Colonic mucosa (tissue), 4 donors: ENCODE measurements at regions of chr14 and their contacts with region 1.

Region 1: DNA sequence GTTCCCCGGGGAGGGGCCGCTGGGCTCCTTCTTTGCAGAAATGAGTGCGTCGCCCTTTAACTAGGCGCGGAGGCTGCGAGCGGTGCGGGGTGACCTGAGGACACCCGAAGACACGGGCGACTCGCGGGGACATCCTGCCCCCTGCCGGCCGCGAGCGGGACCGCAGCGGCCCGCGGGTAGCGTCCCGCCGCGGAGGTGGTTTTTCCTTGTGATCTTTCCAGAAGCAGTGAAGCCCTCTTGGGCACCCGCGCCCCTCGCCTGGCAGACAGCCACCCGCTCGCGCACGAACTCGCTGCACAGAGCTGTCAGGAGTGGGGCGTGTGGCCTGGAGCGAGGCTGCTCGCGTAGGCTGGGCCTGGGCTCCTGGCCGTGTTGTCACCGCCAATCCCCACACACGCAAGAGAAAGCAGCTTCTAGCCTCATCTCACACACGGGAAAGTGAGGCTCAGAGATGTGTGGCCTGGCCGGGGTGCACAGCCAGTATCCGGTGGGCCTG is 67.2 kb downstream of the DIO3 start:
- DNase-seq: peak; percentile 73
- H3K4me3 ChIP-seq: no peak overlapping the region
- H3K27ac ChIP-seq: no peak overlapping the region
- H3K4me1 ChIP-seq: peaks cover 8% of the 10 kb centered on the region
- H3K27me3 ChIP-seq: no peaks in the 10 kb centered on the region
- CTCF ChIP-seq: peak; percentile 100

Region 2: DNA sequence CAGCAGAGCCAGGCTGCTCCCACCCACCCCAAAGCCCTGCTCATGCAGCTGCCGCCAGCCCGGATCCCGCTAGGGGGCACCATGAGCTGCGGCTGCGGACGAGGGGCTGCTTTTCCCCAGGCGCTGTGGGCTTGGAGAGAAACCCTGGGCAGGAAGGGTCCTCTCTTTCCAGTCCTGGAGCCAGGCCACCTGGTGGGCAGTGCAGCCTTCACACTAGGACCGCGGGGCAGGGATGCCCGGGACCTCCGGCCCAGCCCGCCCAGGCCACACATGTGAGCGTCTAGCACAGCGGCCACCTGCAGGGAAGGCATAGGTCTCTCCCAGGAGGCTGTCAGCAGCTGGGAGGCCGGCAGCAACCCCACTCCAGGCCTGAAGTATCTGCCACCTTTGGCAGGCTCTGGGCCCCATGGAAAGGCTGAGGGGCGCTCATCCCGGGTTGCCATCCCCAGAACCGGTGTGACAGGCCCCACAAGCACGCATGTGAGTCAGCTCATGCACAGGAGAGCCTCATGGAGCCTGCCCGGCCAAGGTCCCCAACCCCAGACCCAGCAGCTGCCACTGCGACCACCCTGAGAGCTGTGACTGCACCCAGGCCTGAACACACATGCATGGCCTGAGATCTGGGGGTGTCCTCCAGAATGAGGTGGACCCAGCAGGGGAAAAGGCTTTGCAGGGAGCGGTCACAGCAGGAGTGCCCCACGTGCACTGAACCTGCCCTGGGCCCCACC is 445.0 kb before region 1 on chr14:
- intact Hi-C with region 1: loop called (anchors 5 kb)
- DNase-seq: no peak
- H3K4me3 ChIP-seq: no peak overlapping the region
- H3K27ac ChIP-seq: no peak overlapping the region
- H3K4me1 ChIP-seq: no peaks in the 10 kb centered on the region
- H3K27me3 ChIP-seq: no peaks in the 10 kb centered on the region
- CTCF ChIP-seq: peak; percentile 42

Region 3: GRCh38 chr14:101823511-101824120 is 195.1 kb after region 1 on chr14:
- intact Hi-C with region 1: no loop called
- DNase-seq: no peak
- H3K4me3 ChIP-seq: peak overlapping the region; percentile 2
- H3K27ac ChIP-seq: peak overlapping the region; percentile 71
- H3K4me1 ChIP-seq: no peaks in the 10 kb centered on the region
- H3K27me3 ChIP-seq: no peaks in the 10 kb centered on the region
- CTCF ChIP-seq: no peak